Activated B cell treated with CpG ODN at 0.5 μM for 24 hours (primary cell): ENCODE measurements at regions of chr13 and their contacts with region 1.

Region 1: DNA sequence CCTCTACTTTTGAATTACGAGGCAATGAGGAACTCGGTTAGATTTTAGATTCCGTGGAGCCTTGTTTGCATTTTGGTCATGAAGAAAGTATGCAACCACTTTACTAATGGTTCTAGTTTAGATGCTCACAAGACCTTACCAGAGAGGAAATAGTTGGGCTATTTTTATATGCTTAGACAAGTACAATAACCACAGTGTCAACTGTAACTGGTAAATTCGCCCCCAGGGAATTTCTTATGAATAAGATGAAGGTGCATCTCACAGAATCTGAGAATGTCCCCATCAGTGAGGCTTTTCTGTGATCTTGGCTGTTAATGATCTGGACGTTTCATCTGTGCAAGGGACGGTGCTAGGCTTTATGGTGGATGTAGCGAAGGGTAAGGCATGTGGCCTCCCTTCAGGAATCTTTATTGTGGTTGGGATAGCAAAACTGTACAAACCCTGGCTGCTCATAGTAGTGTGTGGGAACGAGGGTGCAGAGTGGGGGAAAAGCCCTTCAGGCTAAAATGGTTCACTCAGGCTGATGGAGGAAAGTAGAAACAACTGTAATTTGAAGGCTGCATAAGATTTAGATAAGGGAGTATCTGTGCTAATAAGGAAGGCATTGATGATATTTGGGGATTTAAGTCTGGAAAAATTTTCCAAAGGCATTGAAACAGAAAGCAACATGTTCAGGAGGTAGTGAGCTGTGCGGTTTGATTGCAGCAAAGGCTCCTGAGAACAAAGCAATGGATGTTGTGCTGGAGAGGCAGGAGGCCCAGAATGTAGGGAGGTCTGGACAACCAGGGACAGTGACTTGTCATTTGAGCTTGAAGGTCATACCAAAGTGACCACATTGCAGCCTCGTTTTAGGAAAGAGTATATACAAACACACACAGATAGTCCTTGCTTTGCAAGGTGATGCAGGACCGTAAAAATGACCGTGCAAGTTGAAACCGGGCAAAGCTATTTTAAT is 28.4 kb downstream of the UBAC2 start:
- DNase-seq: no peak
- ATAC-seq: peak; percentile 83
- H3K4me3 Mint-ChIP-seq: peak overlapping the region; percentile 76
- H3K27ac Mint-ChIP-seq: peak overlapping the region; percentile 88
- H3K4me1 Mint-ChIP-seq: peaks cover 87% of the 10 kb centered on the region
- H3K27me3 Mint-ChIP-seq: no peaks in the 10 kb centered on the region
- CTCF ChIP-seq: no peak

Region 2: GRCh38 chr13:99176309-99177276 is 52.4 kb before region 1 on chr13:
- CTCF ChIA-PET with region 1: interaction called, 5 read pairs
- POLR2A ChIA-PET with region 1: no interaction called
- intact Hi-C with region 1: loop called (anchors 2 kb)
- DNase-seq: peak; percentile 64
- ATAC-seq: peak; percentile 90
- H3K4me3 Mint-ChIP-seq: peak overlapping the region; percentile 58
- H3K27ac Mint-ChIP-seq: peak overlapping the region; percentile 24
- H3K4me1 Mint-ChIP-seq: peaks cover 43% of the 10 kb centered on the region
- H3K27me3 Mint-ChIP-seq: peaks cover 2% of the 10 kb centered on the region
- CTCF ChIP-seq: no peak

Region 3: DNA sequence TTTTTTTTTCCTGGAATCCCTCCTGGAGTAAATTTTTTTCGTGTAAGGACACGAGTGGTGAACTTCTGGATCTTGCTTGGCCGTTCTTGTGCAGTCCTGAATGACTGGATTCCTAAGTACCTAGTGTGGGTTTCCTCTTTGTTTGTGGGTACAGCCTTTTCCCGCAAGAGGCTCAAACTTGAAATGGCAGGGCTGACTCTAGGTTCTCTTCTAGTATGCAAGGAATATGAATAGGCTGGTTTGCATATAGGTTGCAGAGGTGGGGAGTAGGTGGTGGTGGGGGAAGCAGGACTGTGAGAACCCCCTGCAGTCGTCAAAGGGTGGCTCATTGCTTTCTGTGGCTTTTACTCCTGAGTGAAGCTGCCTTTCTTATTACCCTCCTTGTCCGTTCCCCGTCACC is 14.8 kb before region 1 on chr13:
- CTCF ChIA-PET with region 1: interaction called, 4 read pairs
- POLR2A ChIA-PET with region 1: interaction called, 7 read pairs
- intact Hi-C with region 1: loop called (anchors 1 kb)
- DNase-seq: no peak
- ATAC-seq: peak; percentile 83
- H3K4me3 Mint-ChIP-seq: peak overlapping the region; percentile 49
- H3K27ac Mint-ChIP-seq: peak overlapping the region; percentile 81
- H3K4me1 Mint-ChIP-seq: peaks cover 57% of the 10 kb centered on the region
- H3K27me3 Mint-ChIP-seq: no peaks in the 10 kb centered on the region
- CTCF ChIP-seq: no peak